H1 (cell line): ENCODE measurements at regions of chr19 and their contacts with region 1.

Region 1: DNA sequence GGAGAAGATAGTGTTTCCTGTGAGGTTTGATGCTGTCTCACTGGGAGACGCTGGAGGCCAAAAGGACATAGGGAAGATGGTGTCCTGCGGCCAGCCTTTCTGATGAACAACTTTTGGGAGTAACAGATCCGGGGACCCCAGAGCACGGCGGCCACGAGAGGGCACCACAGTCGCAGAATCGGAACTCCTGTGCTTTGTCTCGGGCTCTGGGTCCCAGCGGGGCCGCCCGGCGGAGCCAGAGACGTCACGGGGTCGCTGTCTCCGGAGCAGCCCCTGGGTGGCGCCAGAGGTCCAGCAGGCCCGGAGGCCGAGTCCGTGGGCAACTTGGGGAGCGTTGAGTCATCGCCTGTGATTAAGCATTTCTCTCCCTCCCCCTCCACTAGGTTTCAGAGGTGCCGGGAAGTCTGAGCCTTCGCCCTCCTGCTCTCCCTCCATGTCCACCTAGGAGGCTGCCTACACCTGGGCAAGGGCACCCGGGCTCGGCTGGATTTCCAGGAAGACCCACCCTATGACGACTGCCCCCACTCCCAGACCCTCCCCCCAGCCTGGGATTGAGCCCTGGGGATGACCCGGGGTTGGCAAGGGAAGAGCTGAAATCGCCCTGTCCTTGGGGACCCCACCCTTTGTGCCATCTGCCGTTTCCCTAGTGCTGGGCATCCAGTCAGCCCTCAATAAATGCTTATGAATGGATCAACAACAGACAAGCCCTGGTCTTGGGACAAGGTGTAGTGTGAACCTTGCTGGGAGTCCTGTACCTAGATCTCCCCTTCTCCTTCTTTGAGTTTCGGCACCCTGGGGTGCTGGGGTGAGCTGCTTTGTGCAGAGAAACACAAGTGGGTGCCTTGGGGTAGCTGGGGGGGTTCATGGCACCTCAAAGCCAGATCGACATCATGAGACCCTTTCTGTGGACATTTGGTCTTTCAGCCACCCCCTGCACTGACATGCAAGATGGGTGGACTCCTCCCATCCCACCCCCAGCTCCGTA is 3.4 kb downstream of the NANOS3 start:
- DNase-seq: peak; percentile 90 to 100
- H3K4me3 ChIP-seq: peak overlapping the region in 3 of 4 experiments; percentile 10 to 48 (median 11); a peak in 3 of 8 replicates
- H3K27ac ChIP-seq: 0 out of 2 replicates have a peak overlapping the region, but pooled peaks have one; percentile 43
- H3K4me1 ChIP-seq: peaks cover 6 to 23% (median 16%) of the 10 kb centered on the region in 4 experiments
- H3K27me3 ChIP-seq: peaks cover 5 to 23% (median 12%) of the 10 kb centered on the region in 4 experiments
- CTCF ChIP-seq: peak; percentile 78 to 99 (median 99)
- EP300 ChIP-seq: peak in 1 of 2 experiments; percentile 80; a peak in 1 of 3 replicates
- POLR2A ChIP-seq: 0 out of 3 replicates have a peak, but pooled peaks of 1 of the 2 experiments have one; percentile 25
- RAD21 ChIP-seq: peak; percentile 98 to 99

Region 2: DNA sequence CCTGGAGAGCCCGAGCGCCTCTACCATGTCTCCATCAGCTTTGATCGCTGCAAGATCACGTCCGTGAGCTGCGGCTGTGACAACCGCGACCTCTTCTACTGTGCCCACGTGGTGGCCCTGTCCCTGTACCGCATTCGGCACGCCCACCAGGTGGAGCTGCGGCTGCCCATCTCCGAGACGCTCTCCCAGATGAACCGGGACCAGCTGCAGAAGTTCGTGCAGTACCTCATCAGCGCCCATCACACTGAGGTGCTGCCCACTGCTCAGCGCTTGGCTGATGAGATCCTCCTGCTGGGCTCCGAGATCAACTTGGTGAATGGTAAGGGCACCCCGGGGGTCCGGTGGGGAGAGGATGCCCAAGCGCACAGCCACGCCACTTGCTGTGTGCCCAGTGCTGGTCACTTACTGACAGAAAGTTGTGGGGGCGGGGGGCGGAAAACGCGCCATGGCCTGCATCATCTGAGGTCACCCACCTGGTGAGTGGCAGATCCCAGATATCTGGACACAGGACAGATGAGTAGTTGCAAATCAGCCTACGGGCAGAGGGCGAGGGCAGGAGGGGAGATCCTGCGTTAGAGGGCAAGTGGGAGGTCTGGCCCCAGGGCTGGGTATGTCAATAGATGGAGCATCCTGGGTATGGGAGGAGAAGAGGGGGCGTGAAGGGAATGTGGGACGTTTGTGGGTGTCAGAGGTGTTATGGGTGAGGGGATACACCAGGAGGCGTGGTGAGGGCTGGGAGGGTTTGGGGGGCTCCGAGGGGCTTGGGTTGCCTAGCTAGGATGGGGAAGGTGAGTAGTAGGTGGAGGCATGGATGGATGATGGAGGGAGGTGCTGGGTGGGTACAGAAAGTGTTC is 75.3 kb before region 1 on chr19:
- CTCF ChIA-PET with region 1: no interaction called
- POLR2A ChIA-PET with region 1: no interaction called
- DNase-seq: peak in 1 of 2 experiments; percentile 82
- H3K4me3 ChIP-seq: no peak overlapping the region
- H3K27ac ChIP-seq: no peak overlapping the region
- H3K4me1 ChIP-seq: no peaks in the 10 kb centered on the region; a peak in 1 of 7 replicates
- H3K27me3 ChIP-seq: no peaks in the 10 kb centered on the region
- CTCF ChIP-seq: peak; percentile 81 to 92 (median 87)
- EP300 ChIP-seq: no peak
- POLR2A ChIP-seq: no peak
- RAD21 ChIP-seq: peak; percentile 59 to 76

Region 3: DNA sequence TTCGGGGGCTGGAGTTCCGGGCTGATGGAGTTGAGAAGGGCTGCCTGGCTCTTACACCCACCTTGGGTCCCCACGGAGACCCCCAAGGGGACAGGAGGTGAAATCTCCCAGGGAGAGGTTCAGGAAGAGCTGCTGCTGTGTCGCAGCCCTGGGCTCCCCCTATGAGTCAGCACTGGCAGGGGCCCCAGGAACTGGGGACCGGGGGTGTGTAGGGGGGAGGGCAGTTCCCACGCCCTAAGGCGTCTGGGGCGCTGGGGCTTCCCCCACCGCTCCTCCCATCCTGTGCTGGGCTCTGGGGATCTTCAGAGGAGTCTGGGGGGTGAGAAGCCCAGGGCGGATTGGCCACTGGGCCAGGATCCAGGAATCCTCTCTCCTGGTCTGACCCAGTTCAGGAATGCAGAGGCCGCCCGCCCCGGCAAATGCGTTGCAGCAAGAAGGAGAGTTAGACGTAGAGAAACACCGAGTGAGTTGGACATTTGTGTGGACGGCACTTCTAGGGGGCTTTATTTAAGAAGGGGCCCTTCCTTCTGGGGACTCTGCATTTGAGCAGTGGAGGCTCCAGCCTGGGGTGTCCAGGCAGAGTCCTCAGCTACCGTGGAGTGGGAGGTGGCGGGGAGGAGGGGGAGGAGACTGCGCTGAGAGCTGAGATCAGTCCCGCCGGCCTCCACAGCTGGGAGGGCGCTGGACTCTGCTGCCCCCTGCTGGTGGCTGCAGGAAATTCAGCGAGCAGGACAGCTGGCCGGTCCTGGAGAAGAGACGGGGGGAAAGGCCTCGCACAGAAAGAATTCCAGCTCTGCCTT is 18.4 kb before region 1 on chr19:
- CTCF ChIA-PET with region 1: interaction called, 21 read pairs
- POLR2A ChIA-PET with region 1: no interaction called
- DNase-seq: peak in 1 of 2 experiments; percentile 99
- H3K4me3 ChIP-seq: peak overlapping the region; percentile 14 to 60 (median 40); a peak in 6 of 8 replicates
- H3K27ac ChIP-seq: no peak overlapping the region
- H3K4me1 ChIP-seq: peaks cover 4 to 7% (median 5%) of the 10 kb centered on the region in 4 experiments; a peak in 6 of 7 replicates
- H3K27me3 ChIP-seq: peaks cover 15 to 32% (median 24%) of the 10 kb centered on the region in 4 experiments
- CTCF ChIP-seq: peak; percentile 92 to 96 (median 94)
- EP300 ChIP-seq: 0 out of 3 replicates have a peak, but pooled peaks of 1 of the 2 experiments have one; percentile 44
- POLR2A ChIP-seq: 0 out of 3 replicates have a peak, but pooled peaks of 1 of the 2 experiments have one; percentile 15
- RAD21 ChIP-seq: peak; percentile 90 to 91

Region 4: DNA sequence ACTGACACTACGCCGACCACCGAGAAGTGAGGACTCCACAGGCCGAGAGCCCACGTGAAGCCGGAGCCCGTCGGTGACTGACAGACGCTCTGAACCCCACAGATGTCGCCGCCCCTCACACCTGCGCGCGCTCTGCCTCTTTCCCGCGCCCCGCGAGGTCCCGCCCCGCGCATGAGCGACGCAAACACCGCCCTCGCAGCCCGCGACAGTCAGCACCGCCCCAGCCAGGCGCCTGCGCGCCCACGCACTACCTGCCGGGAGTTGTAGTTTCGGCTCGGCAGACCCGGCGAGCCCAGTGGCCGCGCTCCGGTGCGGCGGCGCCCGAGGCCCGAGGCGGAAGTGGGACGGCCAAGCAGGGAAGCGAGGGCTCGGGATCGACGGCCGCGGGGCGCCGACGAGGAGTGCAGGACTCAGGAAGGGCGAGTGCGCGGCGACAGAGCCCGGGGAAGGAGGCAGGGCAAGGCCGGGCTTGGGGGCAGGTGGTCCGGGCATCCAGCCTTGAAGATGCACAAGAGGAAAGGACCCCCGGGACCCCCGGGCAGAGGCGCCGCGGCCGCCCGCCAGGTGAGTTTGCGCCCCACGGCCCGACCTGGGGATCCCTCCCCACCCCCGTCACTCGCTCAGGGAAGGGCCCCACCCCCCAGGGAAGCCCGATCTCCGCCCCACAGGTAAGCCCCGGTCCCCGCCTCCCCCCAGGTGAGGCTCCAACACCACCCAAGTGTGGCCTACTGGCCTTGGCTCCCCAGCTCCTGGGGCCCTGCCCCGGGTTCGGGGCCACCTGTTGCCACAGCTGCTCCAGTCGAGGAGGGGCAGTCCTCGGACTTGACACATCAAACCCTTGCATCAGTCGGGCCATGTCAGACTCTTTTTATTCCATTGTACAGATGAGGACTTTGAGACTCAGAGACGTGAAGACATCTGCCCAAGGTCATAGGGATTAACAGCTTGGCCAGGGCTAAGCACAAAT is 25.9 kb after region 1 on chr19 and contains the starts of genes BRME1 and CC2D1A:
- CTCF ChIA-PET with region 1: interaction called, 10 read pairs
- POLR2A ChIA-PET with region 1: interaction called, 7 read pairs
- DNase-seq: peak; percentile 67 to 95
- H3K4me3 ChIP-seq: peak within 1 kb of the TSS; percentile 81 to 85 (median 82)
- H3K27ac ChIP-seq: 0 out of 2 replicates have a peak within 1 kb of the TSS, but pooled peaks have one; percentile 12
- H3K4me1 ChIP-seq: peaks cover 0 to 6% (median under 1%) of the 10 kb centered on the region in 4 experiments; a peak in 2 of 7 replicates
- H3K27me3 ChIP-seq: peaks cover 0 to 4% (median 3%) of the 10 kb centered on the region in 4 experiments; a peak in 3 of 7 replicates
- CTCF ChIP-seq: no peak
- EP300 ChIP-seq: no peak
- POLR2A ChIP-seq: peak in 1 of 2 experiments; percentile 49; a peak in 1 of 3 replicates
- RAD21 ChIP-seq: peak in 1 of 2 experiments; percentile 1; a peak in 1 of 4 replicates
- total RNA-seq, gene BRME1: 4.6 and 4.7 TPM in 2 replicates
- total RNA-seq, gene CC2D1A: 33.0 and 36.4 TPM in 2 replicates

Region 5: DNA sequence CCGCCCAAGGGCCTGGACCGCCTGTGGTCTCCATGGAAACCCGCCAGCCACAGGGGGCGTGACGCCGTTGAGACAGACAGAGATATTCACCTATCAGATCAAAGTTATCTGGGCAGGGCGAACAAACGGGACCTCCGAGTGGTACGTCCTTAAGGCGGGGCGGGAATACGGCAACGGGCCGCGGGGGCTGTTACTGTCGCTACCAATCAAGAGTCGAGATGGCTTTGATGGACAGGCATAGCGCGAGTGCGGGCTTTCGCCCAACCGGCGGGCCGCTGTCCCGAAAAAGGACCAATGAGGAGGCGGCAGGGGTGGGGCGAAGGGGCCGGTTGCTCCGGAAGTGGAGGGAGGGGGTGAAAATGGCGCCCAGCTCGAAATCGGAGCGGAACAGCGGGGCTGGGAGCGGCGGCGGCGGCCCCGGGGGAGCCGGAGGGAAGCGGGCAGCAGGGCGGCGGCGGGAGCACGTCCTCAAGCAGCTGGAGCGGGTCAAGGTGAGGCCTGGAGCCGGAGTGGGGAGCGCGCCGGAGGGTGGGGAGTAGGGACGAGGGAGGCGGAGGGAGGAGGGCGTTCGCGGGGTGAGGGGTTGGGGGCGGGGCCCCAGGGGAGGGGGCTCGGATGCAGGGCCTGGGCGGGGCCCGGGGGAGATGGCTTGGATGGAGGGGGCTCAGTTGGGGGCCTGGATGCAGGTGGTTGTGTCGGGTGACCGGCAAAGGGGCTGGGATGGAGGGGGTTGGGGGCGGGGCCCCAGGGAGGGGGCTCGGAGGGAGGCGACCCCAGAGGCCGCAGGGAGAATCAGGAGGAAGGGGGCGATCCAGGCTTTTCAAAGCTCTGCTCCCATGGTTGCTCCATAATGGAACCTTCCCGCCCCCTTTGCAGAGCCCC is 72.0 kb after region 1 on chr19 and contains the start of gene DCAF15:
- CTCF ChIA-PET with region 1: interaction called, 10 read pairs
- POLR2A ChIA-PET with region 1: interaction called, 13 read pairs
- DNase-seq: peak; percentile 99 to 100
- H3K4me3 ChIP-seq: peak within 1 kb of the TSS; percentile 82 to 100 (median 91)
- H3K27ac ChIP-seq: peak within 1 kb of the TSS; percentile 94
- H3K4me1 ChIP-seq: peaks cover 0 to 7% (median 3%) of the 10 kb centered on the region in 4 experiments; a peak in 6 of 7 replicates
- H3K27me3 ChIP-seq: no peaks in the 10 kb centered on the region
- CTCF ChIP-seq: no peak
- EP300 ChIP-seq: peak in 1 of 2 experiments; percentile 4; a peak in 1 of 3 replicates
- POLR2A ChIP-seq: peak; percentile 72 to 84
- RAD21 ChIP-seq: no peak
- total RNA-seq, gene DCAF15: 68.7 and 77.1 TPM in 2 replicates

Region 6: DNA sequence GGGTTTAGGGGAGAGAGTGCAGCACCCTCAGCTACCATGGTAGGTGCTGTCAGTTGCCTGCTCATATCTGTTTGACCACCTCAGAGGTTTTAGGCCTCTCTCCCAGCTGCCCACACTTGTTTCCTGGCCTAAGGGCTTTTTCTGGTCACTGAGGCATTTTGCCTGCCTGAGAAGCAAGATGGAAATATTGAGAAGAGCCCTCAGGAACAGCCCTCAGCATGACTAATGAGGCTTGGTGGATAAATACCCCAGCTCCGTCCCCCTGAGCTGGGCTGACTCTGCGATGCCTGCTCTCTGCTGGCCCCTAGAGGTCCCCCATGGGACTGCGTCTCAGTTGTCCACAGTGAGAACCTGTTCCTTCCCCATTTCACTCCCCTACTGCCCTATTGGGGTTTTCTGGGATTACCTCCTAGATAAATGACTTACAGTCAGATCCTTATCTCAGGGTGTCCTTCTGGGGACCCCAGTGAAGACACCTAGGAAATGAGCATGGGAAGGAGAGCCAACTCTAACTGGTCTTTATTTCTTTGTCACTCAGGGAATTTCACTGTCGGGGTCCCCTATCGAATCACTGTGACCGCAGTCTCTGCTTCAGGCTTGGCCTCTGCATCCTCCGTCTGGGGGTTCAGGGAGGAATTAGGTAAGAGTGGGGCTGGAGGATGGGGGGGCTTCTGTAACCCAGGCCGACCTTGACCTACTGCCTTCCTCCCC is 168.2 kb after region 1 on chr19:
- CTCF ChIA-PET with region 1: interaction called, 27 read pairs
- POLR2A ChIA-PET with region 1: no interaction called
- DNase-seq: peak; percentile 56 to 97
- H3K4me3 ChIP-seq: no peak overlapping the region
- H3K27ac ChIP-seq: no peak overlapping the region
- H3K4me1 ChIP-seq: no peaks in the 10 kb centered on the region; a peak in 1 of 7 replicates
- H3K27me3 ChIP-seq: no peaks in the 10 kb centered on the region
- CTCF ChIP-seq: peak; percentile 95 to 97 (median 96)
- EP300 ChIP-seq: no peak
- POLR2A ChIP-seq: no peak
- RAD21 ChIP-seq: peak; percentile 66 to 75

Region 7: GRCh38 chr19:14073261-14073924 is 193.0 kb after region 1 on chr19:
- CTCF ChIA-PET with region 1: interaction called, 68 read pairs
- POLR2A ChIA-PET with region 1: interaction called, 10 read pairs
- DNase-seq: peak in 1 of 2 experiments; percentile 86
- H3K4me3 ChIP-seq: peak overlapping the region; percentile 46 to 66 (median 50)
- H3K27ac ChIP-seq: no peak overlapping the region
- H3K4me1 ChIP-seq: peaks cover 0 to 15% (median 9%) of the 10 kb centered on the region in 4 experiments; a peak in 5 of 7 replicates
- H3K27me3 ChIP-seq: peaks cover 17 to 40% (median 32%) of the 10 kb centered on the region in 4 experiments
- CTCF ChIP-seq: peak; percentile 62 to 89 (median 83)
- EP300 ChIP-seq: no peak
- POLR2A ChIP-seq: no peak
- RAD21 ChIP-seq: peak in 1 of 2 experiments; percentile 19; a peak in 2 of 4 replicates